Sciatic nerve (tissue), 2 donors: ENCODE measurements at regions of chr7 and their contacts with region 1.

Region 1: DNA sequence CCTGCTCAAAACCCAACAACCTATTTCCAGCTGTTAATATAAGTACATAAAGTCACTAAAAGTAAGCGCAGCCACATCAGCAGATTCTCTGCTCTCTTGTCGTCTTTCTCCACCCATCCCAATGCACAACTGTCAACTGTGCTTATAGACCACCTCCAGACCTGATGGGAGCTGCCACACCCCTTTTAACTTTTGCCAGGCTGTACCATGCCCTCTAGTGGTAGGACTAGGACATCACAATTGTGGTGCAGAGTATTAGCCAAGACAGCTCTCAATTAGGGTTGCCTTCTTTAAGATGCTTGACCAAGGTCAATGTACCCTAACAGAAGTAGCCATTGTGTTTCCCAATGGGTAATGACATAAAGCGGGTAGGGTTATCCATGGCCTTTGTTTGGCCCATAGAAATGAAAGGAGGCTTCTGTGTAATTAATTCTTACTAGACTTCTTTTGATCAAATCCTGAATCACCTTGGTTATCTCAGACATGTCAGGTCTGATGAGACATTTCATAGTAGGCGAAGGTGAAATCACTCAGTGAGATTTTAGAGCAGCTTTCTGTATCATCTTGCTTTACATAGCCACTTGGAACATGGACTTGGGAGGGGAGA is 68.1 kb downstream of the SCRN1 start:
- DNase-seq: no peak
- ATAC-seq: peak; percentile 74

Region 2: GRCh38 chr7:29988424-29989256 is 67.1 kb after region 1 on chr7:
- intact Hi-C with region 1: loop called (anchors 10 kb)
- DNase-seq: peak; percentile 72
- ATAC-seq: peak; percentile 63

Region 3: DNA sequence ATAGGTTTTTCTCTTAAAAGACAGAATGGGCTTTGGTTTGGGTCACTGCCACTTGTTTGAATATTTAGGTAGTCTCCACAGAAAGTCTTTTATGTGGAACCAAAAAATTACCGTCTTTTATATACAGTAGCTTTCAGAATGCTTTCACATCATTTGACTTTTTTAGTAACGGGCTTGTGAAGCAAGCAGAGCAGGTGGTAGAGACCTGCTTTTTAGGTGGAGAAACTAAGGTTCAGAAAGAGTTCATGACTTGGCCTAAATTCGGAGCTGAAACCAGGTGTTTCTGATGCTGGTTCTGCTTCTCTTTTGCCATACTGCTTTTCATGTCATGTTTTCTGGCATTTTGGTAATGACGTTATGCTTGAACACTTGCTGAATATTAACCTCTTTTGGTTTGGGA is 709.5 kb after region 1 on chr7:
- intact Hi-C with region 1: no loop called
- DNase-seq: no peak
- ATAC-seq: no peak